Mammary epithelial cell (primary cell): ENCODE measurements at regions of chr22 and their contacts with region 1.

Region 1: GRCh38 chr22:40867109-40867508 is 5.2 kb upstream of the DNAJB7 start:
- DNase-seq: no peak
- H3K4me3 ChIP-seq: no peak overlapping the region
- H3K27ac ChIP-seq: no peak overlapping the region
- H3K4me1 ChIP-seq: no peaks in the 10 kb centered on the region
- H3K27me3 ChIP-seq: no peaks in the 10 kb centered on the region
- CTCF ChIP-seq: no peak

Region 2: GRCh38 chr22:40789131-40789530 is 78.0 kb before region 1 on chr22:
- CTCF ChIA-PET with region 1: no interaction called
- dilution Hi-C with region 1: loop called (anchors 5 kb)
- in situ Hi-C with region 1: no loop called
- intact Hi-C with region 1: no loop called
- DNase-seq: no peak
- H3K4me3 ChIP-seq: no peak overlapping the region
- H3K27ac ChIP-seq: no peak overlapping the region
- H3K4me1 ChIP-seq: peaks cover 8% of the 10 kb centered on the region
- H3K27me3 ChIP-seq: no peaks in the 10 kb centered on the region
- CTCF ChIP-seq: no peak

Region 3: DNA sequence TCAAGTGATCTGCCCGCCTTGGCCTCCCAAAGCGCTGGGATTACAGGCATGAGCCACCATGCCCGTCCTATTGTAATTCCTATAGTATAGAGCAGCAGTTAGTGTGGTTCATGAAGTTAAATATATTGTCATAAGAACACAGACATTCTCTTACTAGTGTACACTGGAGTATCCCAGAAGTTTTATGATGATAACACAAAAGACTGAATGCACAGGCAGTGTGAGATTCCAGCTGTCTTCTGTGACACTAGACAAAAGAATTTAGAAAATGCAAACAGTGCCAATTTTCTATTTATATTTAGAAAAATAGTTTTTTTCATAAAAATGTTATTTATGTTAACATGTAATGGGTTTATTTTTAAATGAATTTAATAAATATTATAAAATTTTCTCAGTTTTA is 44.7 kb after region 1 on chr22:
- CTCF ChIA-PET with region 1: no interaction called
- dilution Hi-C with region 1: no loop called
- in situ Hi-C with region 1: no loop called
- intact Hi-C with region 1: no loop called
- DNase-seq: no peak
- H3K4me3 ChIP-seq: no peak overlapping the region
- H3K27ac ChIP-seq: no peak overlapping the region
- H3K4me1 ChIP-seq: no peaks in the 10 kb centered on the region
- H3K27me3 ChIP-seq: no peaks in the 10 kb centered on the region
- CTCF ChIP-seq: no peak

Region 4: DNA sequence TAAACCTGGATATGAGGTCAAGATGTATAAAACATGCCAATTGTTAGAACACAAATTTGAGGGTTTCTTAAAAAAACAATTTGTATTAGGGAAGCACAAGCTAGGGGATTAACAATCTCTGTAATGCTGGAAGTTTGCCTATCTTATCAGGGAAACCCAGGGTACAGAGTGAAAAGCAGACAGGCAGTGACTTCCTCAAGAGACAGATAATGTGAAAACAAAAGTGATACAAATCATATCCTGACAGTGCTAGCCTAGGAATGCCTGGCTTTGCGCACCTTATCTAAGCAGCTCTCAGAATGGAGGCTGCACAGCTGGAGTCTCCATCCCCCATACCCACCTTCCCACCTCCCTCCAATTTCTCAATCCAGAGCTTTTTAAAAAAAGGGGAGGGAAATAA is 61.5 kb after region 1 on chr22:
- CTCF ChIA-PET with region 1: no interaction called
- dilution Hi-C with region 1: loop called (anchors 5 kb)
- in situ Hi-C with region 1: no loop called
- intact Hi-C with region 1: no loop called
- DNase-seq: no peak
- H3K4me3 ChIP-seq: no peak overlapping the region
- H3K27ac ChIP-seq: no peak overlapping the region
- H3K4me1 ChIP-seq: no peaks in the 10 kb centered on the region
- H3K27me3 ChIP-seq: no peaks in the 10 kb centered on the region
- CTCF ChIP-seq: no peak